ENCODE measurements at regions of chr1 and their contacts with region 1.

Region 1: GRCh38 chr1:246566128-246566812 is at the starts of genes CNST and TFB2M:
- DNase-seq: peak; percentile 93
- H3K4me3 Mint-ChIP-seq: peak within 1 kb of the TSS; percentile 98
- H3K27ac Mint-ChIP-seq: peak within 1 kb of the TSS; percentile 99
- H3K4me1 Mint-ChIP-seq: peaks cover 48% of the 10 kb centered on the region
- H3K27me3 Mint-ChIP-seq: no peaks in the 10 kb centered on the region
- total RNA-seq, gene CNST: 27.0 and 30.8 TPM in 2 replicates
- total RNA-seq, gene TFB2M: 24.8 and 30.9 TPM in 2 replicates

Region 2: DNA sequence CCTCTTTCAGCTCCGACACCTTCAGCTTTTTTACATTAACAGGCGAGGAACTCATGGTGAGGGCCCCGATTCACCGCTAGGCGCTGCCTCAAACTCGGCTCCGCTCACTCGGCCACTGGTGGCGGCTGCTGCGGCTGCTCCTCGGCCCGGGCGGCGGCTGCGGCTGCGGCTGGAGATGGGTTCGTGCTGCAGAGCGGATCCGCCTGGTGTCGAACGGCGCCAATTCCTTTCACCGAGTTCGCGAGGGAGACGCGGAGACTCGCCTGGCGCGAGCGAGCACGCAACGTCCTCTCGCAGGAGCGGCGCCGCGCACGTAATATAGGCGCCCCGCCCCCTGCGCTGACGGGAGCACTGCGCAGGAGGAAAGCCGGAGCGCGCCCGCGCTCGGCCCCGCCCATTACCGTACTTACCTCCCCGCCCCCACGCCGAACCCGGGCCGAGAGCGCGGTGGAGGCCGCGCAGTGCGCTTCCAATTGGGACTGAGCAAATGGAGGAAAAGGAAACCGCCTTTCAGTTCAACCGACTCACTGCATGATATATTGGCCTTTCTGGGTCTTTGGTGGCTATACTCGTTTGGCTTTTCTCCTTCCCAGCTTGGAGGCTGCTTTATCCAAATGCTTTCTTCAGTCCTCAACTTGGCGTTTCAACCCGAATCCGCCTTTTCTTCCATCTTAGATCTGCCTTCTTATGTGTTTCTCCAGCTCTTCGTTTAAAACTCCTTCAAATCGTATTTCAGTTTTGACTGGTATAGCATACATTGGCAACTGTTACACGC is 1701.8 kb before region 1 on chr1 and contains the start of gene HNRNPU:
- intact Hi-C with region 1: loop called (anchors 5 kb)
- DNase-seq: peak; percentile 97
- H3K4me3 Mint-ChIP-seq: peak within 1 kb of the TSS; percentile 87
- H3K27ac Mint-ChIP-seq: peak within 1 kb of the TSS; percentile 95
- H3K4me1 Mint-ChIP-seq: peaks cover 41% of the 10 kb centered on the region
- H3K27me3 Mint-ChIP-seq: no peaks in the 10 kb centered on the region
- total RNA-seq, gene HNRNPU: 566 and 573 TPM in 2 replicates

Region 3: GRCh38 chr1:246329900-246330299 is 236.4 kb before region 1 on chr1:
- intact Hi-C with region 1: loop called (anchors 1 kb)
- DNase-seq: peak; percentile 41
- H3K4me3 Mint-ChIP-seq: peak overlapping the region; percentile 53
- H3K27ac Mint-ChIP-seq: peak overlapping the region; percentile 65
- H3K4me1 Mint-ChIP-seq: peaks cover 50% of the 10 kb centered on the region
- H3K27me3 Mint-ChIP-seq: no peaks in the 10 kb centered on the region

Region 4: DNA sequence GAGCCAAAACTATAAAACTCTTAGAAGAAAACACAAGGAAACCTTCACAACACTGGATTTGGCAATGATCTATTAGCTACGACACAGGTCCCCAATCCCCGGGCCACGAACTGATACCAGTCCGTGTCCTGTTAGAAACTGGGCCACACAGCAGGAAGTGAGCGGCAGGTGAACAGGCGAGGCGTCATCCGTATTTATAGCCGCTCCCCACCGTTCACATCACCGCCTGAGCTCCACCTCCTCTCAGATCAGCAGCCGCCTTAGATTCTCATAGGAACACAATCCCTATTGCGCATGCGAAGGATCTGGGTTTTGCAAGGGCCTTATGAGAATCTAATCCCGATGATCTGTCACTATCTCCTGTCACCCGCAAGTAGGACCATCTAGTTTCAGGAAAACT is 12.1 kb before region 1 on chr1:
- intact Hi-C with region 1: no loop called
- DNase-seq: no peak
- H3K4me3 Mint-ChIP-seq: no peak overlapping the region
- H3K27ac Mint-ChIP-seq: no peak overlapping the region
- H3K4me1 Mint-ChIP-seq: peaks cover 5% of the 10 kb centered on the region
- H3K27me3 Mint-ChIP-seq: no peaks in the 10 kb centered on the region

Region 5: GRCh38 chr1:246699095-246699735 is 132.9 kb after region 1 on chr1:
- intact Hi-C with region 1: loop called (anchors 1 kb)
- DNase-seq: peak; percentile 71
- H3K4me3 Mint-ChIP-seq: no peak overlapping the region
- H3K27ac Mint-ChIP-seq: no peak overlapping the region
- H3K4me1 Mint-ChIP-seq: peaks cover 6% of the 10 kb centered on the region
- H3K27me3 Mint-ChIP-seq: peaks cover 2% of the 10 kb centered on the region

Region 6: DNA sequence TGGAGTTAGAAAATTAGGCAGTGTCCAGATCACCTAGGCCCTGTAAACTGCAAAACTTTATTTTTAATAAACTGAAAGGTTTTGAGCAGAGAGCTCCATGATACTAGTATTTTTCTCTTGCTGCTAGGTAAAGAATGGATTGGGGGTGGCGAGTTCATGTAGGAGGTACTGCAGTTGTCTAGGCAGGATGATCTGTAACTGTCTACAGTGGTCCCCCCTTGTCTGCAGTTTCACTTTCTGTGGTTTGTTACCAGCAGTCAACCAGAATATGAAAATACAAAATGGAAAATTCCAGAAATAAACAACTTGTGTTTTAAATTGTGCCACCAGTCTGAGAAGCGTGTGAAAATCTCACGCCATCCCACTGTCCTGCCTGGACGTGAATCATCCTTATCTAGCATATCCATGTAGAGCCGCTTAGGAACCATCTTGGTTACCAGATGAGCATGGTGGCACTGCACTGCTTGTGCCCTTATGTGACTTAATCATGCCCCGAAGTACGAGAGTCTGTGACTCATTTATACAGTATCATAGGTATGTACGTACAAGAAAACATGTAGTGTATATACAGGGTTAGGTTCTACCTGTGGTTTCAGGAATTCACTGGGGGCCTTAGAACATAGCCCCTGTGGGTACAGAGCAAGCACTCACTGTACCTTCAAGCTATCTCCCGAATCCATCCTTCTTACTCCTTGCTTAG is 271.3 kb after region 1 on chr1:
- intact Hi-C with region 1: no loop called
- DNase-seq: no peak
- H3K4me3 Mint-ChIP-seq: no peak overlapping the region
- H3K27ac Mint-ChIP-seq: no peak overlapping the region
- H3K4me1 Mint-ChIP-seq: peaks cover 7% of the 10 kb centered on the region
- H3K27me3 Mint-ChIP-seq: no peaks in the 10 kb centered on the region

Region 7: GRCh38 chr1:247089616-247090375 is 523.5 kb after region 1 on chr1:
- intact Hi-C with region 1: no loop called
- DNase-seq: no peak
- H3K4me3 Mint-ChIP-seq: no peak overlapping the region
- H3K27ac Mint-ChIP-seq: no peak overlapping the region
- H3K4me1 Mint-ChIP-seq: no peaks in the 10 kb centered on the region
- H3K27me3 Mint-ChIP-seq: no peaks in the 10 kb centered on the region

Region 8: DNA sequence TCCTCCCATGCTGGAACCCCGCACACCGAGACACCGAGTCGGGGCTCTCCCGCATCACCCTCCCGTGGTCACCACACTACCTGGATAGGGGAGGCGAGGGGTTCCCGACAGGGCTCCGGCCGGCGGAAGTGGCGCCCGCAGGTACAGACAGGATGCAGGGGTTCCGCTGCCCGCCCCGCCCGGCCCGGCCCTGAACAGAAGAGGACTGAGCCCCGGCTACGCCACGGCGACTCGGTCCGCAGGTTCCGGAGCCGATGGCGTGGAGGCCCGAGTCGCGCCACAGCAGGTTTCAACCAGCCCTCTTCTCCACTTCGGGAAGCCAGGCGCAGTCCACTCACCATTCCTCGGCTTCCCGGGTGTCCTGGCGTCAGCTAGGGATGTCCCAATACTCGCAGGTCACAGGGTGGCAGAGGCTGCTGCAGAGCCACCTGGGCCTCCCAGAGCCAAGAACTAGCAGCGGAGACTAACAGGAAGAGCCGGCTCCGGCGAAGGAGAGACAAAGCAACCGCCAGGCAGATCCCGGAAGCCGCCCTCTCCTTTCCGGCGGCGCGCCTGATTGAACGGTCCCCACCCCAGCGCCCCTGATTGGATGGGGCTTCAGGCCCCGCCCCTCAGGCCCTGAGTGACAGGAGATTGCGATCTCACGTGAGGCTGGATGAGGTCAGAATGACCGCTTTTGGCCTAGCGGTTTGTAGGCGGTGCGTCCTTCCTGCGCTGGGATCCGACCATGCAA is 537.8 kb after region 1 on chr1 and contains the start of gene ZNF669:
- intact Hi-C with region 1: loop called (anchors 5 kb)
- DNase-seq: peak; percentile 86
- H3K4me3 Mint-ChIP-seq: peak within 1 kb of the TSS; percentile 91
- H3K27ac Mint-ChIP-seq: peak within 1 kb of the TSS; percentile 74
- H3K4me1 Mint-ChIP-seq: peaks cover 15% of the 10 kb centered on the region
- H3K27me3 Mint-ChIP-seq: peaks cover 14% of the 10 kb centered on the region
- total RNA-seq, gene ZNF669: 8.0 and 9.5 TPM in 2 replicates

Measured in activated T-helper 1 cell treated with anti-CD3 and anti-CD28 coated beads, Interleukin-12 subunit alpha, Interleukin-12 subunit beta, Interleukin-2, Interleukin-4 antibody, amounts not matched to agents 30 ng/mL and 10 ng/mL and 1 ng/mL, durations not matched to agents 14 hours and 24 hours and 36 hours (primary cell).